Mammary epithelial cell (primary cell): ENCODE measurements at regions of chr2 and their contacts with region 1.

Region 1: GRCh38 chr2:88016086-88016959 is at the start of gene RNU2-63P:
- DNase-seq: peak; percentile 74
- H3K4me3 ChIP-seq: peak within 1 kb of the TSS; percentile 58 to 66 (median 65)
- H3K27ac ChIP-seq: peak within 1 kb of the TSS; percentile 100
- H3K4me1 ChIP-seq: peaks cover 9% of the 10 kb centered on the region
- H3K27me3 ChIP-seq: no peaks in the 10 kb centered on the region
- CTCF ChIP-seq: no peak
- total RNA-seq, gene RNU2-63P: 6.8 to 94.5 TPM

Region 2: GRCh38 chr2:88003074-88003755 is 13.1 kb before region 1 on chr2:
- CTCF ChIA-PET with region 1: no interaction called
- dilution Hi-C with region 1: no loop called
- in situ Hi-C with region 1: no loop called
- intact Hi-C with region 1: loop called (anchors 1 kb)
- DNase-seq: no peak
- H3K4me3 ChIP-seq: no peak overlapping the region
- H3K27ac ChIP-seq: no peak overlapping the region
- H3K4me1 ChIP-seq: no peaks in the 10 kb centered on the region
- H3K27me3 ChIP-seq: peaks cover 1% of the 10 kb centered on the region
- CTCF ChIP-seq: no peak

Region 3: DNA sequence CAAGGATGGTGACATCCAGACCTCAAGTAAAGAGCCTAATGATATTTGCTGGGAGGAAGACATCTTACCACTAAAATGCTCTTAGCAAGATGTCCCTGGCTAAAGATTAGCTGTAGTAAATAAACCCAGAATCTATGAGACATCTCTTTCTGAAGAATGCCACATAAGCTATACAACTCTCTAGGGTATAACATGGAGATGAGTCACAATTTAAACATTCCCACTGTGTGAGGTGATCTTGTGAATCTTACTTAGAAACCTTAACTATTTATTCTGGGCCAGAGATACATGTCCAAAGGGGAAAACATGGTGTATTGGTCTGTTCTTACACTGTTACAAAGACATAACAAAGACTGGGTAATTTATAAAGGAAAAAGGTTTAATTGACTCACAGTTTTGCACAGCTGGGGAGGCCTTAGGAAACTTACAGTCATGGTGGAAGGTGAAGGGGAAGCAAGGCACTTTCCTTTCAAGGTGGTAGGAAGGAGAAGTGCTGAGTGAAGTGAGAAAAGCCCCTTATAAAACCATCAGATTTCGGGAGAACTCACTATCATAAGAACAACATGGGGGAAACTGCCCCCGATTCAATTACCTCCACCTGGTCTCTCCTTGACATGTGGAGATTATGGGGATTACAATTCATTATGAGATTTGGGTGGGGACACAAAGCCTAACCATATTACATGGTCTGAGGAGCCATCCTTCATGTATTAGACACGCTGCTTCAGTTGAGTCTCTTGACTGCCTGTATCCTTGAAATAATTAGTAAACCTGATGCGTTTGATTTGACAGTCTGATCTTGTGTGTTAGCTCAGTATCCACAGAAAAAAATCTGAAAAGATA is 22.2 kb after region 1 on chr2:
- CTCF ChIA-PET with region 1: interaction called, 7 read pairs
- dilution Hi-C with region 1: no loop called
- in situ Hi-C with region 1: no loop called
- intact Hi-C with region 1: loop called (anchors 2 kb)
- DNase-seq: peak; percentile 87
- H3K4me3 ChIP-seq: no peak overlapping the region
- H3K27ac ChIP-seq: peak overlapping the region; percentile 46
- H3K4me1 ChIP-seq: peaks cover 21% of the 10 kb centered on the region
- H3K27me3 ChIP-seq: no peaks in the 10 kb centered on the region
- CTCF ChIP-seq: no peak

Region 4: DNA sequence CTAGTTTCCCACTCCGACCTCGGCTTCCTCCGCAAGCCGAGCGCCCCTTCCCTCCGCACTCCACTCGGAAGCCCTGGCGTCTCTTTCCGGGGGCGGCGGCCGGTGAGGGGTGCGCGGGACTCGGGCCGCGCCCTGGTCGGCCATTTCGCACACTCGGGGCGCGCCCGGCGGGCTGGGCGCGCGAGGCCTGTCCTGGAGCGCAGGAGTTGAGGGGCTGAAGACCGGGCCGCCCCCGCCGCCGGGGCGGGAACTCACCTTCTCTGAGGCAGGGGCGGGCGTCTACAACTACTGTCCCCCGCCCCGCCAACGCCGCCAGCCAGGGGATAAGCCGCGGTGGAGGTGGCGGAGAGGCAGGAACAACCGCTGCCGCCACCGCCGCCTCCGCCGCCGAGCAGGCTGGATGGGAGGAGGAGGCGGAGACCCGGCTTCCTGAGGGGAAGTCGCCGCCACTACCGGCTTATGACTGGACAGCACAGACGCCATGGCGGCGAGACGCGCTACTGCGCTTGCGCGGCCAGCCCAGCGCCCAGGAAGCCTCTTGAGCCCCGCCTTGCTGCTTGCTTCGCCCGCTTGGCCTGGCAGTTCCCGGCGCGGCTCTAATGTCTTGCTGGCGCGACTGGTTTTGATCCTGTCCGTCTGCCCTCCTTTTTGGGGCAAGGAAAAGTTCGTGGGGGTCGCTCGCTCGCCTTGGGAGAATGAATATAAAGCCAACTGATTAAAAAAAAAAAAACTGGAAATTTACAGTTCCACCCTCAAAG is 39.2 kb after region 1 on chr2 and contains the start of gene KRCC1:
- CTCF ChIA-PET with region 1: no interaction called
- dilution Hi-C with region 1: no loop called
- in situ Hi-C with region 1: no loop called
- intact Hi-C with region 1: loop called (anchors 1 kb)
- DNase-seq: peak; percentile 95
- H3K4me3 ChIP-seq: peak within 1 kb of the TSS; percentile 79 to 91 (median 79)
- H3K27ac ChIP-seq: peak within 1 kb of the TSS; percentile 88
- H3K4me1 ChIP-seq: peaks cover 19% of the 10 kb centered on the region
- H3K27me3 ChIP-seq: no peaks in the 10 kb centered on the region
- CTCF ChIP-seq: no peak
- total RNA-seq, gene KRCC1: 12.7 to 24.5 TPM

Region 5: DNA sequence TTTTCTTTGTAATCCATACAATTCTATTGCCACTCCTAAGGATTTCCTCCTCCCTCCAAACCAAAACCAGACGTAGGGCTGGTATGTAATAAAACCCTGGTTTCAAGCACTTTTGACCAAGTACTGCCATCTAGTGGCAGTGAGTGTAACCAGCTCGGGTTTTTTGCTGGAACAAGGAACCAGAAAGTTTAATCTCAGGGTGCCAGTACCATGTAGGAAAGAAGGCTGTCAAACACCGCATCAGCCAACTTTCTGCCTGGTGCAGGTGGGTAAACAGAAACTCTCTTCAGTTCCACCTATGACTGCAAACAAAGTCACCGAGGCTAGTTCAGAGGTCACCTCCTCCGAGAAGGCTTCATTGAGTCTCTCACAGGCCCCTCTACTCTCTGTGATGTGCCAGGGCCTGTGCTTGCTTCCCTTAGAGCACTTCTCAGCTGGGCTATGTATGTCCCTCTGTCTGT is 143.7 kb after region 1 on chr2:
- CTCF ChIA-PET with region 1: no interaction called
- dilution Hi-C with region 1: no loop called
- in situ Hi-C with region 1: no loop called
- intact Hi-C with region 1: loop called (anchors 1 kb)
- DNase-seq: peak; percentile 49
- H3K4me3 ChIP-seq: no peak overlapping the region
- H3K27ac ChIP-seq: no peak overlapping the region
- H3K4me1 ChIP-seq: peaks cover 9% of the 10 kb centered on the region
- H3K27me3 ChIP-seq: no peaks in the 10 kb centered on the region
- CTCF ChIP-seq: peak; percentile 88 to 89